PC-9 (cell line): ENCODE measurements at regions of chr11 and their contacts with region 1.

Region 1: DNA sequence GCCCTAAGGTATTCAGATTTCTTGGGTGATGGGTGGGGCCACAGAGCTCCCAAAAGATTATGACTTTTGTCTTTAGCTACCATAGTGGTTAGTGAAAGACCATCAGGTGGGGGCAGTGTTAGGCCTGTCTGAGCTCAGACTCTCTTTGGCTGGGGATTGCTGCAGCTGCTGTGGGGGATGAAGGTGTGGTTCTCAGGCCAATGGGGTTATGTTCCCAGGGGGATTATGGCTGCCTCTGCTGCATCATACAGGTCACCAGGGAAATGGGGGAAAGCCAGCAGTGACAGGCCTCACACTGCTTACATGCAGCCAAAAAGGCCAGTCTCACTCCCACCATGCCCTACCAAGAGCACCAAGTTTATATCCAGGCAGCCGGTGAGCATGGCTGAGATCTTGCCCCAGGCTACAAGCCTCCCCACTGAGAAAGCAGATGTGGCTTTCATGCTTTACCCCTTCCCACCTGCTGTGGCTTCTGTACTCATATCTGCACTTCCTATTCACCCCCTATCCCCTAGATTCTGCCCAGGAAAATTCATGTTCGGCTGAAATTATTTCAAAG is 24.8 kb downstream of the CNTF start:
- DNase-seq: no peak
- H3K4me3 ChIP-seq: no peak overlapping the region
- H3K27ac ChIP-seq: no peak overlapping the region
- H3K4me1 ChIP-seq: no peaks in the 10 kb centered on the region
- H3K27me3 ChIP-seq: no peaks in the 10 kb centered on the region
- CTCF ChIP-seq: no peak

Region 2: DNA sequence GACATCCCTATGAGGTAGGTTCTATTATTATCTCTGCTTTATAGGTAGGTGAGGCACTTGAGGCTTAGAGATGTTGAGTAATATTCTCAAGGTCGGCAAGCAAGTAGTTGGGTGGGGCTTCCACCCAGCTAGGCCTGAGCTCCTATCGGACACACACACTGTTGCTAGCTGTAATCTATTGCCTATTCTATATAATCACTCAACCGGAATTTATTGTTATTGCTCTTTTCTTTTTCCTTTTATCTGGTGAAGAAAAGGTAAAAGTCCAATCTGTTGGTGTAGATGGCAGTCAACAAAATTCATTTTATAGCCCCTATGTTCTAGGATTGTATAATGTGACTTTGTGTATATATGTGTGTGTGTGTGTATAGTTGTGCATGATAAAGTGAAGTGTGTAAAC is 455.0 kb before region 1 on chr11:
- CTCF ChIA-PET with region 1: no interaction called
- POLR2A ChIA-PET with region 1: interaction called, 10 read pairs
- intact Hi-C with region 1: no loop called
- DNase-seq: peak in 1 of 2 experiments; percentile 15
- H3K4me3 ChIP-seq: no peak overlapping the region
- H3K27ac ChIP-seq: no peak overlapping the region
- H3K4me1 ChIP-seq: no peaks in the 10 kb centered on the region
- H3K27me3 ChIP-seq: no peaks in the 10 kb centered on the region; the same call in 1 of the 2 replicates
- CTCF ChIP-seq: no peak

Region 3: GRCh38 chr11:58675334-58676155 is 28.3 kb after region 1 on chr11:
- CTCF ChIA-PET with region 1: no interaction called
- POLR2A ChIA-PET with region 1: no interaction called
- intact Hi-C with region 1: no loop called
- DNase-seq: peak; percentile 59 to 76
- H3K4me3 ChIP-seq: no peak overlapping the region
- H3K27ac ChIP-seq: no peak overlapping the region
- H3K4me1 ChIP-seq: no peaks in the 10 kb centered on the region
- H3K27me3 ChIP-seq: no peaks in the 10 kb centered on the region
- CTCF ChIP-seq: peak; percentile 97